Activated naive CD4-positive, alpha-beta T cell treated with anti-CD3 and anti-CD28 coated beads for 36 hours (primary cell): ENCODE measurements at regions of chr15 and their contacts with region 1.

Region 1: DNA sequence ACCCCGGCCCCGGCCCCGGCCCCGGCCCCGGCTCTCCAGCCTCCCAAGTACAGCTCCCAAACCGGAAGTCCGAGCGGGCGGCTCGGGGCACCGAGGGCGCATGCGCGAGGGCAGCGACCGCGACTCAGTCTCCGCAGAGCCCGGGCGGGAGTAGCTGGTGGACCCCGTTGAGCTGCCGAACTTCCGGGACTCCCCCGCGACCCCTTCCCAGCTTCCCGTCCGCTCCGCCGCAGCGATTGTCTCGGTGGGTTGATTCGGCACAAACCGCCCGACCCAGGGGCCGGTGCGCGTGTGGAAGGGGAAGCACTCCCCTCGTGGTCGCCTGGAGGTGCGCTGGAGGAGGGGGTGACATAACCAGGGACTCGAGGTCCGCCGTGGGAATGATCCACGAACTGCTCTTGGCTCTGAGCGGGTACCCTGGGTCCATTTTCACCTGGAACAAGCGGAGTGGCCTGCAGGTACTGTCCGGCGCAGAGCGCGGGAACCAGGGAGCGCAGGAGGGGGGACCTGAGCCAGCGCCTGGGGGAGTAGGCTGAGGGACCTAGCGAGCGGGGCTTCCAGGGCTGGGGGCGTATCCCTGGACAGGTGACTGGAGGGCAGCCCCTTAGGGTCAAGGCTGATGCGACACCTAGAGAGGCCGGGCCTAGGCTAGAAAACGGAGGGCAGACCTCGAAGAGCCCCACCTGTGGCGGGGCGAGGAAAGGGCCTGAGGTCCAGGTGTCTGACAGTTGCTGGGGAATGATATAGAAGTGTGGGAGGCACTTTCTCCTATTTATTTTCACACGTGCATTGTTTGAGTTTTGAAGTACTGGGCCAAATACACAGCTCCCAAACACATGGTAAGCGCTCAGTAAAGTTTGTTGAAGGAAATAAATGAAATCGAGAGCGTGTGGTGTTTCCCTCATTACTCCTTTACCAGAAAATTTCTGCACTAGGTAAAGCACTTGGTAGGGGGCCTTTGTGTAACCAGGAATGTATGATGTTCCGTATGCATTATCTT is at the starts of genes TUBGCP4 and ZSCAN29:
- DNase-seq: peak; percentile 76
- H3K4me3 Mint-ChIP-seq: peak within 1 kb of the TSS; percentile 87
- H3K27ac Mint-ChIP-seq: peak within 1 kb of the TSS; percentile 76
- H3K4me1 Mint-ChIP-seq: peaks cover 42% of the 10 kb centered on the region
- H3K27me3 Mint-ChIP-seq: no peaks in the 10 kb centered on the region
- total RNA-seq, gene TUBGCP4: 34.5 to 35.3 TPM
- total RNA-seq, gene ZSCAN29: 13.6 to 13.9 TPM

Region 2: DNA sequence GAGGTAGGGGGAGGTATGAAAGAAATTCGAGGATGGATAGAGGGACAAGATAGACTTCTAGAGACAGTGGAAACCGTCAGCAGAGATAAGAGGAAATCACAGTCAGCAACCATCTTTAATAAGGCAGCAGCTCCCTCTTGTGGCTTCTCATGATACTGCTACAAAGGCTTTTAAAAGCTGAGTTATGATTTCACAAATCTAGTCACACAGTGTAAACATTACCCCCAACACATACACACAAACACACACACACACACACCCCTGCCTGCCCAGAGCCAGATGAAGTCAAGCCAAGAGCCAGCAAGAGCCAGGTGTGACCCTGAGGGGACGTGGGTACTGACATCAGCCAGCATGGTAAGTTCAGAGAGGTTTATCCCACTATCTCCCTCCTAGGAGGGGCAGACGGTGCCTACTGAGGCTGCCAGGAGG is 85.7 kb before region 1 on chr15:
- CTCF ChIA-PET with region 1: no interaction called
- intact Hi-C with region 1: no loop called
- DNase-seq: peak; percentile 75
- H3K4me3 Mint-ChIP-seq: no peak overlapping the region
- H3K27ac Mint-ChIP-seq: no peak overlapping the region
- H3K4me1 Mint-ChIP-seq: no peaks in the 10 kb centered on the region
- H3K27me3 Mint-ChIP-seq: peaks cover under 1% of the 10 kb centered on the region

Region 3: GRCh38 chr15:43329960-43330779 is 41.1 kb before region 1 on chr15 and contains the start of gene LCMT2:
- CTCF ChIA-PET with region 1: no interaction called
- intact Hi-C with region 1: loop called (anchors 1 kb)
- DNase-seq: peak; percentile 93
- H3K4me3 Mint-ChIP-seq: peak within 1 kb of the TSS; percentile 95
- H3K27ac Mint-ChIP-seq: peak within 1 kb of the TSS; percentile 97
- H3K4me1 Mint-ChIP-seq: peaks cover 28% of the 10 kb centered on the region
- H3K27me3 Mint-ChIP-seq: no peaks in the 10 kb centered on the region
- total RNA-seq, gene LCMT2: 4.2 to 4.3 TPM

Region 4: GRCh38 chr15:43498988-43499387 is 127.7 kb after region 1 on chr15:
- CTCF ChIA-PET with region 1: no interaction called
- intact Hi-C with region 1: no loop called
- DNase-seq: no peak
- H3K4me3 Mint-ChIP-seq: no peak overlapping the region
- H3K27ac Mint-ChIP-seq: no peak overlapping the region
- H3K4me1 Mint-ChIP-seq: no peaks in the 10 kb centered on the region
- H3K27me3 Mint-ChIP-seq: no peaks in the 10 kb centered on the region